CD4-positive, alpha-beta memory T cell (primary cell): ENCODE measurements at regions of chr15 and their contacts with region 1.

Region 1: DNA sequence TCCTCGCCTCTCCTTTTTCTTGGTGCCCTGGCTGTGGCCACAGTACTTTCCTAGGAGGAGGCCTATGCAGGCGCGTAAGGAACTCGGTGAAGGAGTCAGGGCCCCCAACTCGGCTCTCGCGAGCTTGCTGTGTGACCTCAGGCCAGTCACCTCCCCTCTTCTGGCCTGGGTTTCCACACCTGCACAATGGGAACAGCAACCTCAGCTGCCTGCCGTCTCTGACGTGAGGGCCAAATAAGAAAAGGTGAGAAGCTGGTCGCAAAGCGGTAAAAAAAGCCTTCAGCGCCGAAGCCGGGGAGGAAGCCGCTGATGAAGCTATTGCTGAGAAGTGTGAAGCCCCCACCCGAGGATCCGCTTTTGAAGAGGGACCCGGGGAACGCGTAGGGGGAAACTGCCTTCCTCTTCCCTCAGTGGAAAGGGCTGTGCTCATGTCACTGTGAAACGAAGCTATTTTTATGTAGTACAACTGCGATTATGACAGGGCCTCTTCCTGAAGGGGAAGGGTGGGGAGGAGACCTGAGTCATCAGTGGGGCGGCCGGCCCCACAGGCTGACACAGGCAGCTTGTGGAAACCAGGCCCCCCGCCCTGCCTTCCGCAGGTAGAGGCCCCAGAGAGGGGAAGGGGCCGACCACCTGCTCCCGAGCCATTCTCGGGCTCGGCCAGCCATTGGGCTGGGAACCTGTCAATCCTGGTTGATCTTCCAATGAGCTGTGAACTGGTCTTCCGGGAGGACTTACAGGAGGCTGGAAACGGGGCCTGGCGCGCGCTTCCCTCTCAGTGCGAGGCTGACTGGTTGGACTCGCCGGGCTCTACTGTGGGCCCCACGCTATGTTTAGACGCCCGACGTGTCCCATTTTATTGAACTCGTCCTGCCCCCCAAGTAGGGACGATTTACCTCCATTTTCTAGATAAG is 18.0 kb upstream of the ANKDD1A start:
- DNase-seq: peak; percentile 94 to 98 (median 96)
- H3K4me3 ChIP-seq: peak overlapping the region; percentile 53 to 59
- H3K4me3 Mint-ChIP-seq: peak overlapping the region; percentile 84 to 93 (median 86)
- H3K27ac ChIP-seq: peak overlapping the region; percentile 89
- H3K27ac Mint-ChIP-seq: peak overlapping the region; percentile 95 to 99 (median 98)
- H3K4me1 ChIP-seq: peaks cover 74% of the 10 kb centered on the region
- H3K4me1 Mint-ChIP-seq: peaks cover 53 to 73% (median 64%) of the 10 kb centered on the region in 4 donors
- H3K27me3 ChIP-seq: no peaks in the 10 kb centered on the region
- H3K27me3 Mint-ChIP-seq: no peaks in the 10 kb centered on the region

Region 2: GRCh38 chr15:64162870-64163658 is 730.7 kb before region 1 on chr15 and contains the start of gene PPIB:
- CTCF ChIA-PET with region 1: no interaction called
- POLR2A ChIA-PET with region 1: interaction called, 11 read pairs
- intact Hi-C with region 1: loop called (anchors 2 kb)
- DNase-seq: peak; percentile 96 to 98 (median 97)
- H3K4me3 ChIP-seq: peak within 1 kb of the TSS; percentile 68 to 71
- H3K4me3 Mint-ChIP-seq: peak within 1 kb of the TSS; percentile 81 to 95 (median 90)
- H3K27ac ChIP-seq: peak within 1 kb of the TSS; percentile 80
- H3K27ac Mint-ChIP-seq: peak within 1 kb of the TSS; percentile 85 to 98 (median 96)
- H3K4me1 ChIP-seq: peaks cover 54% of the 10 kb centered on the region
- H3K4me1 Mint-ChIP-seq: peaks cover 28 to 53% (median 40%) of the 10 kb centered on the region in 4 donors
- H3K27me3 ChIP-seq: no peaks in the 10 kb centered on the region
- H3K27me3 Mint-ChIP-seq: no peaks in the 10 kb centered on the region
- total RNA-seq, gene PPIB: 247 to 271 TPM

Region 3: GRCh38 chr15:64702816-64703646 is 190.7 kb before region 1 on chr15:
- CTCF ChIA-PET with region 1: no interaction called
- POLR2A ChIA-PET with region 1: interaction called, 3 read pairs
- intact Hi-C with region 1: loop called (anchors 1 kb)
- DNase-seq: peak; percentile 91 to 94 (median 91)
- H3K4me3 ChIP-seq: peak overlapping the region; percentile 54 to 84
- H3K4me3 Mint-ChIP-seq: peak overlapping the region; percentile 79 to 95 (median 92)
- H3K27ac ChIP-seq: peak overlapping the region; percentile 73
- H3K27ac Mint-ChIP-seq: peak overlapping the region; percentile 44 to 95 (median 92)
- H3K4me1 ChIP-seq: peaks cover 52% of the 10 kb centered on the region
- H3K4me1 Mint-ChIP-seq: peaks cover 45 to 59% (median 52%) of the 10 kb centered on the region in 4 donors
- H3K27me3 ChIP-seq: no peaks in the 10 kb centered on the region
- H3K27me3 Mint-ChIP-seq: no peaks in the 10 kb centered on the region

Region 4: GRCh38 chr15:64754663-64755426 is 138.9 kb before region 1 on chr15:
- CTCF ChIA-PET with region 1: no interaction called
- POLR2A ChIA-PET with region 1: no interaction called
- intact Hi-C with region 1: no loop called
- DNase-seq: no peak
- H3K4me3 ChIP-seq: no peak overlapping the region
- H3K4me3 Mint-ChIP-seq: no peak overlapping the region
- H3K27ac ChIP-seq: no peak overlapping the region
- H3K27ac Mint-ChIP-seq: no peak overlapping the region
- H3K4me1 ChIP-seq: no peaks in the 10 kb centered on the region
- H3K4me1 Mint-ChIP-seq: no peaks in the 10 kb centered on the region
- H3K27me3 ChIP-seq: no peaks in the 10 kb centered on the region
- H3K27me3 Mint-ChIP-seq: peaks cover 4% of the 10 kb centered on the region in 2 donors

Region 5: DNA sequence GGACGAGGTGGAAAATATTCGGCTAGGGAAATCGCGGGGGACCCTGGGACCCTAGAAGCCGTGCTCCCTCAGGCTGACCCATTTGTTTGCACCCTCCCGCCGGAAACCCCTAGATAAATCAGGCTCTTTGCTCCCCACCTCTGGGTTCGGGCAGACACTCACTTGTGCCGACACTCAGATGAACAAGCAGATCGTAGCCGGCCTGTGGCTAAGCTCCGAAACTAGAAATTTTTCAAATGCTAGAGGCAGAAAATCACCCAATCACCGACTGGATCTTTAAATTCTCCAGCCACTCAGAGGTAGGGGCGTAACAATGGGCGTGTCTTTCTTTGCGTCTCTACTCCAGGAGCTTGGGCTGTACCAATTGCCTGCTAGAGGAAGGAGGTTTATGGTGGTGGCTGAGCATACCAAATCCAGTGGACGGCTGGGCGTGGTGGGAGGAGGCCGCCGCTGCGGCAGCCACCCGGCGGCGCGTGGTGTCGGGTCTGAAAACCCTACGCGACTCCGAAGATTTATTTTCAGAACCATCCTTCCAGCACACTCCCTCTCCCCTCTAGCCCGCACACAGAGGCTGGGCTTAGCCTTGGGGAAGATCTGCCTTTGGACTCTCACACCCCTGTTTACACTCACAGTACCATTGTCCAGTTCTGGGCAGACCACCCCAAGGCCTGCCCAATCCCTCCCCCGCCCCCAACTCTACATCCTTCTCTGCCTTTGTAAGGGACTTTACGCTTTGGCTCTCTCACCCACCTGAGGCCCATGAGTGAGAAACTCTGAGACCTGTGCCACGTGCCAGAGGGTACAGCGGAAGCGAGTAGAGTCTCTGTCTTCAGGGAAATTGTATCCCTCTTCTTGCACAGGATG is 68.1 kb before region 1 on chr15 and contains the start of gene PIF1:
- CTCF ChIA-PET with region 1: interaction called, 12 read pairs
- POLR2A ChIA-PET with region 1: interaction called, 36 read pairs
- intact Hi-C with region 1: loop called (anchors 1 kb)
- DNase-seq: peak; percentile 88 to 96 (median 92)
- H3K4me3 ChIP-seq: peak within 1 kb of the TSS; percentile 60 to 62
- H3K4me3 Mint-ChIP-seq: peak within 1 kb of the TSS; percentile 84 to 94 (median 88)
- H3K27ac ChIP-seq: peak within 1 kb of the TSS; percentile 18
- H3K27ac Mint-ChIP-seq: peak within 1 kb of the TSS; percentile 55 to 90 (median 81)
- H3K4me1 ChIP-seq: peaks cover 23% of the 10 kb centered on the region
- H3K4me1 Mint-ChIP-seq: peaks cover 22 to 34% (median 29%) of the 10 kb centered on the region in 4 donors
- H3K27me3 ChIP-seq: no peaks in the 10 kb centered on the region
- H3K27me3 Mint-ChIP-seq: peaks cover 2 to 8% of the 10 kb centered on the region in 2 donors
- total RNA-seq, gene PIF1: 0.17 to 0.58 TPM

Region 6: GRCh38 chr15:64856429-64857145 is 37.2 kb before region 1 on chr15:
- CTCF ChIA-PET with region 1: interaction called, 14 read pairs
- POLR2A ChIA-PET with region 1: interaction called, 17 read pairs
- intact Hi-C with region 1: no loop called
- DNase-seq: no peak
- H3K4me3 ChIP-seq: no peak overlapping the region
- H3K4me3 Mint-ChIP-seq: peak overlapping the region in 5 of 8 donors; percentile 1 to 50 (median 38)
- H3K27ac ChIP-seq: no peak overlapping the region
- H3K27ac Mint-ChIP-seq: peak overlapping the region; percentile 71 to 91 (median 79)
- H3K4me1 ChIP-seq: peaks cover 55% of the 10 kb centered on the region
- H3K4me1 Mint-ChIP-seq: peaks cover 38 to 68% (median 54%) of the 10 kb centered on the region in 4 donors
- H3K27me3 ChIP-seq: no peaks in the 10 kb centered on the region
- H3K27me3 Mint-ChIP-seq: no peaks in the 10 kb centered on the region

Region 7: GRCh38 chr15:64905119-64905831 is 11.5 kb after region 1 on chr15:
- CTCF ChIA-PET with region 1: interaction called, 48 read pairs
- POLR2A ChIA-PET with region 1: interaction called, 82 read pairs
- intact Hi-C with region 1: loop called (anchors 1 kb)
- DNase-seq: peak; percentile 72 to 76 (median 74)
- H3K4me3 ChIP-seq: peak overlapping the region in 1 of 2 donors; percentile 12
- H3K4me3 Mint-ChIP-seq: peak overlapping the region in 7 of 8 donors; percentile 51 to 79 (median 76)
- H3K27ac ChIP-seq: no peak overlapping the region
- H3K27ac Mint-ChIP-seq: peak overlapping the region; percentile 20 to 84 (median 52)
- H3K4me1 ChIP-seq: peaks cover 39% of the 10 kb centered on the region
- H3K4me1 Mint-ChIP-seq: peaks cover 30 to 47% (median 39%) of the 10 kb centered on the region in 4 donors
- H3K27me3 ChIP-seq: no peaks in the 10 kb centered on the region
- H3K27me3 Mint-ChIP-seq: peaks cover 0 to 3% of the 10 kb centered on the region in 2 donors

Region 8: GRCh38 chr15:64975390-64975789 is 81.7 kb after region 1 on chr15:
- CTCF ChIA-PET with region 1: no interaction called
- POLR2A ChIA-PET with region 1: no interaction called
- intact Hi-C with region 1: no loop called
- DNase-seq: no peak
- H3K4me3 ChIP-seq: no peak overlapping the region
- H3K4me3 Mint-ChIP-seq: no peak overlapping the region
- H3K27ac ChIP-seq: no peak overlapping the region
- H3K27ac Mint-ChIP-seq: peak overlapping the region in 1 of 7 donors; percentile 24
- H3K4me1 ChIP-seq: no peaks in the 10 kb centered on the region
- H3K4me1 Mint-ChIP-seq: no peaks in the 10 kb centered on the region
- H3K27me3 ChIP-seq: no peaks in the 10 kb centered on the region
- H3K27me3 Mint-ChIP-seq: no peaks in the 10 kb centered on the region